HEK293 (cell line): ENCODE measurements at regions of chr12 and their contacts with region 1.

Region 1: DNA sequence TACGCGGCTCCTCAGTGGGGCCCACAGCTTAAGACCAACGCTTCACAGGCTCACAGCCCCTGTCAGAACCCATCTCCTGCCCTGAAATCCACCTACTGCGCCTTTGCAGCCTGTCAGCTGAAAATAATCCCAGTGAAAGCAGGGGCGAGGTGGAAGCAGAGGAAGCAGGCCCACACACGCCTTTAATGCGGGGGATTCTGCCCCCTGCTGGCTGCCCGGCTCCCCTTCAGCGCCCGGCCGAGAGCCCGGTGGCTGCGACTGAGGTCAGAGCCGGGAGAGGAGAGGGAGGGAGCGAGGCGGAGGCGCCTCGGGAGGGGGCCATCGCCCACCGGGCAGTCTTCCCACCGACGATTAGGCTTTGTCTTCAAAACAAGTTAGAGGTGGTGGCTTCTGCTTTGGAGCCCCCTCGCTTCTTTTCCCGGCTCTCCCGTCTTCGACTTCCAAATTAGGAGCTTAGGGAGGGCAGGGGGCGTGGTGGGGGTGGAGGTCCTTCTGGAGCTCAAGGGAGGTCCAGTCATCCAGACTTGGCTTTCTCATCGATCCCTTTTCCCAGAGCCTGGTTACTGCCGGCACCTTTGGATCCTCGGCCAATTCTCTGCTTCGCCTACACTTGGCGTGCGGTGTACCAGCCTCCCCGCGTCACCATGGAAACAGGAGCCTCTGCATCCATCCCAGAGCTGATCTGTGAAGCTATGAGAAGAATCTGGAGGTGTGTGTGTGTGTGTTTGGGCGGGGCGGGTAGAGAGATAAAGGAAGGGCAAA is 25.2 kb upstream of the RND1 start:
- H3K4me3 ChIP-seq: peak overlapping the region; percentile 20
- H3K27ac ChIP-seq: no peak overlapping the region
- H3K4me1 ChIP-seq: no peaks in the 10 kb centered on the region
- CTCF ChIP-seq: peak; percentile 95

Region 2: GRCh38 chr12:48631057-48631456 is 259.8 kb before region 1 on chr12:
- CTCF ChIA-PET with region 1: no interaction called
- POLR2A ChIA-PET with region 1: no interaction called
- H3K4me3 ChIP-seq: no peak overlapping the region
- H3K27ac ChIP-seq: no peak overlapping the region
- H3K4me1 ChIP-seq: no peaks in the 10 kb centered on the region
- CTCF ChIP-seq: no peak

Region 3: DNA sequence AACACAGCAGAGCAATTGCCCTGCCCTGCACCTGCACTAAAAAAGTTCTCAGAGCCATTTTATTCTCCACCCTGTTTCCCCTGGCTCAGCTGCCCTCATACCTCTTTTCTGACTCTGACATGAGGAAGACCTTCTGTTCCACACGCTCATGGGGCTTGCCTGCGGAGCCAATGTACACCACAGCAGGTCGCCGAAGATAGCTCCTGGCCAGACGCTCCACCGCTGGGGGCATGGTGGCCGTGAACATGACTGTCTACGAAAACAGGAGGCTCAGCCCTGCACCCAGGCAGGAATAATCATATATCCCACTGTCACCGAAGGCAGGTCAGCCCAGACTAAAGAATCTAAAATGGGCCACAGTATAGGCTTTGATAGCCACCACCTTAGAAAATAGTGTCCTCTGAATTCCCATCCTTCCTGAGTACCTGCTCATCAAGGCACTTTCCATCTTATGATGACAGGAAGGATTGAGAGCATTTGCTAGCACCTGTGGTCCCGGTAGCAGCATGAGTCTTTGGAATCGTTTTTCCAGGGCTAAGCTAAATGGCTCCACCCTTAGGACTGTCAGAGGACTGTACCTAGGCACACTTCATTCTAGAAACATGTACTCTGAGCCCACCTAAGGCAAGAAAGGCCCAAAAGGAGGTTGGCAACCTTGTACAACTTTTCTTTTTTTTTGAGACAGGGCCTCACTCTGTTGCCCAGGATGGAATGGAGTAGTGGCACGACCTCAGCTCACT is 58.3 kb before region 1 on chr12:
- CTCF ChIA-PET with region 1: interaction called, 10 read pairs
- POLR2A ChIA-PET with region 1: no interaction called
- H3K4me3 ChIP-seq: no peak overlapping the region
- H3K27ac ChIP-seq: no peak overlapping the region
- H3K4me1 ChIP-seq: no peaks in the 10 kb centered on the region
- CTCF ChIP-seq: no peak

Region 4: GRCh38 chr12:48865434-48866290 is 25.2 kb before region 1 on chr12 and contains the start of gene RND1:
- CTCF ChIA-PET with region 1: interaction called, 301 read pairs
- POLR2A ChIA-PET with region 1: interaction called, 13 read pairs
- H3K4me3 ChIP-seq: peak within 1 kb of the TSS; percentile 43
- H3K27ac ChIP-seq: no peak within 1 kb of the TSS; the same call in 1 of the 2 replicates
- H3K4me1 ChIP-seq: peaks cover 6% of the 10 kb centered on the region
- CTCF ChIP-seq: no peak; the same call in 1 of the 2 replicates

Region 5: DNA sequence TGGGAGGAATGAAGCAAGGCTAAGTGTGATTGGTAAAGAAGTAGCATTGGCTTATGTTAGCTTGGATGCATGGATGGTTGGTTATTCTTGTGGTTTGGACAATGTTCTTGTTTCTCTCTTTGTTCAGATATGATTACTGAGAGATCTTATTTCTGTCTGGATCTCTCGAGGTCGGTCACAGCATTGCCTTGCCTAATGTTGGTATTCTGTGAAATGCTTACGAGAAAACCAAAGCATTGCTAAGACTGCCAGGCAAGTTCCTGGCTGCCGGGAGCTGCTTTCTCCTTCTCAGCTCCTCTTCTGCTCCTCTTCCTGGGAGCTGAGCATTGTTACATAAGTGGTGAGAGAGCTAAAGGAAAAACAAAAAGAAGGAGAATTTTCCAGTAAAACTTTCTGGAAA is 17.7 kb before region 1 on chr12:
- CTCF ChIA-PET with region 1: interaction called, 84 read pairs
- POLR2A ChIA-PET with region 1: no interaction called
- H3K4me3 ChIP-seq: no peak overlapping the region
- H3K27ac ChIP-seq: no peak overlapping the region
- H3K4me1 ChIP-seq: no peaks in the 10 kb centered on the region
- CTCF ChIP-seq: no peak

Region 6: GRCh38 chr12:48903982-48904411 is 13.2 kb after region 1 on chr12:
- CTCF ChIA-PET with region 1: interaction called, 75 read pairs
- POLR2A ChIA-PET with region 1: no interaction called
- H3K4me3 ChIP-seq: peak overlapping the region; percentile 46
- H3K27ac ChIP-seq: no peak overlapping the region
- H3K4me1 ChIP-seq: peaks cover 4% of the 10 kb centered on the region; the same call in 1 of the 2 replicates
- CTCF ChIP-seq: no peak

Region 7: DNA sequence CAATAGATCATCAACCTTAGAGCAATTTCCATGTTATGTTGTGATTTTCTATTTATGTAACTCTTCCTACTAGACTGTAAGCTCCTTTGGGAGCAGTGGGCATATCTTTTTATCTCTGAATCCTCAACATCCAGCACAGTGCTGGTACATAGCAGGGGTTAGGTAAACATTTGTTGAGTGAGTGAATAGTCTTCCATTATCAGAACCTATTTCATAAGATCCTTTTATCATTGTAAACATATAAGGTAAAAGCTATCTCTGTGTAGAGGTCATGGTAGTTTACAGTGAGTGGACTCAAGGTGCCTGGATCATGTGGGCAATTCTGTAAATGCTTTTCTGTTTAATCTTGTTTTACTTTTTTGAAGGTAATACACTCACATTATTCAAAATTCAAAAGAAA is 19.4 kb after region 1 on chr12:
- CTCF ChIA-PET with region 1: interaction called, 10 read pairs
- POLR2A ChIA-PET with region 1: interaction called, 5 read pairs
- H3K4me3 ChIP-seq: no peak overlapping the region
- H3K27ac ChIP-seq: no peak overlapping the region
- H3K4me1 ChIP-seq: no peaks in the 10 kb centered on the region
- CTCF ChIP-seq: no peak